ENCODE measurements at regions of chr7 and their contacts with region 1.

Region 1: GRCh38 chr7:149195180-149196150 is at the start of gene ZNF282:
- DNase-seq: peak; percentile 93
- H3K4me3 Mint-ChIP-seq: peak within 1 kb of the TSS; percentile 85
- H3K27ac Mint-ChIP-seq: peak within 1 kb of the TSS; percentile 94
- H3K4me1 Mint-ChIP-seq: peaks cover 14% of the 10 kb centered on the region
- H3K27me3 Mint-ChIP-seq: no peaks in the 10 kb centered on the region
- CTCF ChIP-seq: peak; percentile 52
- total RNA-seq, gene ZNF282: 43.9 and 46.4 TPM in 2 replicates

Region 2: GRCh38 chr7:149147072-149147751 is 48.3 kb before region 1 on chr7 and contains the start of gene ZNF398:
- CTCF ChIA-PET with region 1: interaction called, 28 read pairs
- POLR2A ChIA-PET with region 1: interaction called, 29 read pairs
- intact Hi-C with region 1: no loop called
- DNase-seq: peak; percentile 67
- H3K4me3 Mint-ChIP-seq: peak within 1 kb of the TSS; percentile 80
- H3K27ac Mint-ChIP-seq: peak within 1 kb of the TSS; percentile 35
- H3K4me1 Mint-ChIP-seq: peaks cover 7% of the 10 kb centered on the region
- H3K27me3 Mint-ChIP-seq: no peaks in the 10 kb centered on the region
- CTCF ChIP-seq: peak; percentile 73
- total RNA-seq, gene ZNF398: 13.8 and 15.7 TPM in 2 replicates

Region 3: DNA sequence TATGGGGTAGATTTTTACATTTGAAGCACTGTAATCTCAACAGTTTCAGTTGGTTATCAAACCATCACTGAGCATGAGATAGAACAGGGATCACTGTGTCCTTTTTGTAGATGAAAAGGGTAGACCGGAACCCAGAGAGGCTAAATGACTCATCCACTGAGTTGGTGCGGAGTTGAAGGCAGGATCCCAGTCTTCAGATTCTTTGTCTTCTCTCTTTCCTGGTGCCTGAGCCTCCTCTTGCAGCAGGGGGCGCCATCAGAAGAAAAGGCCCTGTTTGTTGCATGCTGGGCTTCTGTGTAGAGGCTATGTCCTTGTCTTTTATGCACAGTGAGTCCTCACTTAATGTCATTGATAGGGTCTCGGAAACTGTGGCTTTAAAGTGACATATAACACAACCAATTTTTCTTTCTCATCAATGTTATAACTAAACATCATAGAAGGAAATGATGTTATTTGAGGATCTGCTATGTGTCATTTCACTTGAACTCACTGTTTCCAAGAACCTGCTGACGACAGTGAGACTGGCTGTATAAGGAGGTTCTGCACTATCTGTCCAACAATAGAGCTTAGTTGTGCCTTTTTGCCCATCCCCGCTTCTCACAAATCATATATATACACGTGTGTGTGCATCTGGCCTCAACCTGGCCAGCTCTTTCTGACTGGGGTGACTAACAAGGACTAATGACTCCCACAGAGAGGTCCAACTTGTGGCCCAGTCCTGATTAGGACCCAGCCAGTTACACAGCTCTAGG is 14.2 kb after region 1 on chr7:
- CTCF ChIA-PET with region 1: interaction called, 14 read pairs
- POLR2A ChIA-PET with region 1: interaction called, 7 read pairs
- intact Hi-C with region 1: no loop called
- DNase-seq: peak; percentile 70
- H3K4me3 Mint-ChIP-seq: no peak overlapping the region
- H3K27ac Mint-ChIP-seq: no peak overlapping the region
- H3K4me1 Mint-ChIP-seq: no peaks in the 10 kb centered on the region
- H3K27me3 Mint-ChIP-seq: no peaks in the 10 kb centered on the region
- CTCF ChIP-seq: peak; percentile 34

Region 4: DNA sequence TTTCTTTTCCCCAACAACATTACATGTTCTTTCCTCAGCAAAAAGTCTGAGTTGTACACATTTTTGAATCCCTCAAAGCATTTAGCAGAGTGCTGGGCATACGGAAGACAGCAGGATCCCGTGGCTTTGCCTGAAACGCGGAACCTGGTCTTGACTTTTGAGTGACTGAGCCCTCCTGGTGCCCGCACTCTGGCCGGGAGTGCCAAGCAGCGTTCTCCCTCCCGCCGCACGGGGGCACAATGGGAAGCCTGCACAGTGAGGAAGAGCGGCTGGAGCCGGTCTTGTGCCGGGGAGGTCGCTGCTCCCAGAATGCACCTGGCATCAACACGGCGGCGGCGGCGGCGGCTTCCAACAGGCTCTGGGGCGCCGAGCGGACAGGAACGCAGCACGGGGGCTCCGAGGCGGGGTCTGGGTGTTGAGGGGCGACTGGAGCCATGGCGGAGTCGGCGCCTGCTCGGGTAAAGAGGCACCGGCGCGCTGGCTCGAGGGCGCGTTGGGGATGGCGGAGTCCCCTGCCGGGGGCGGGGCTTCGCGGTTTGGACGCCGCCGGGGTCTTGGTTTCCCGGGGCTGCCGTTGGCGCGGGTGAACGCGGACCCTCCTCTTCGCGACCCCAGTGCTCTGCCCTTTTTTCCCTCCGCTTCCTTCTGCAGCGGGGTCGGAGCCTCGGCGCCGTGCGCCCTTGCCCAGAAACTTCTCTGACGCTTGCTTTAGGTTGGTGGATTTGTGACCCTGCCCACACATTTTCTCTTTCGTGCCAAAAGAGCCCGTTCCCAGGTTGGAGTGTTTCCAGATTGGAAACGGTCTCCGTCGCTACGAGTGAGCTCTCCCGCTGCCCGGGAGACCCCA is 44.1 kb after region 1 on chr7 and contains the start of gene ZNF212:
- CTCF ChIA-PET with region 1: interaction called, 7 read pairs
- POLR2A ChIA-PET with region 1: interaction called, 6 read pairs
- intact Hi-C with region 1: loop called (anchors 2 kb)
- DNase-seq: peak; percentile 92
- H3K4me3 Mint-ChIP-seq: peak within 1 kb of the TSS; percentile 81
- H3K27ac Mint-ChIP-seq: peak within 1 kb of the TSS; percentile 83
- H3K4me1 Mint-ChIP-seq: peaks cover 17% of the 10 kb centered on the region
- H3K27me3 Mint-ChIP-seq: no peaks in the 10 kb centered on the region
- CTCF ChIP-seq: peak; percentile 73
- total RNA-seq, gene ZNF212: 10.5 and 14.7 TPM in 2 replicates